Ascending aorta (tissue), 2 donors: ENCODE measurements at regions of chr15 and their contacts with region 1.

Region 1: DNA sequence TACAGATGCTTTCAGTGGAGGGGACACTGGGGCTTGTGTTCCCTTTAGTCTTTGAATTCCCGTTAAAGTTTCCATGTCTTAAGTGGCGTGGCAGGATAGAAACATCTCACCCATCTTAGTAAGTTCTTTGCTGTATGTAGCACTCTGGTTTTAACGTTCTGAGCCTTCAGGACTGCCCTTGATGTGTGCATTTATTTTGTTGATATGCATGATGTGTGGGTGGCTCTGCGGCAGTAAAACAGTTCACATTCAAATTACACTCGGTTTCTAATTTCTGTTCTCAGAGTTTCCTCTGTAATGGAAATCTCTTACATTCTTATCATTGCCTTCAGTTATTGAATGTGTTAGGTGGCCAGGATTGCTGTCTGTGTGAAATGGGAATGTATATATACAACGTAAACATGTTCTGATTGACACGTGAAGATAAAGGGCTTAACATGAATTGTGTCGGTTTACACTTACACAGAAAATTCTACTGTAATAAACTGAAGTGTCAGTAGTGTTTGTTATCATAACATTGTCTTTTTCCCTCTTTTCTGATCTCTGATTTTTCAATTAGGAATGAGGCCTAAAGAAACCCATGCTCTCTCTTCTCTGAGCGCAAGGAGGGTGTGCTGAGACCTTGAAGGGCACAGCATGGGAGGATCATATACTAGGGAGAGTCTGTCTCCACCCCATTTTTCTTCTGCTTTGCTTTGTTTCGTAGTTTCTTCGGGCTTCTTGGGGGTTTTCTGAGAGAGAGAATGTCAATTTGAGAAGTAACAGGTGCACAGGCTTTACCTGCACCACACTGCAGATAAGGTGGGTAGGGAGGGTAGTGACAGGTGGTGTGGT is 51.5 kb downstream of the IGF1R start:
- DNase-seq: no peak
- H3K4me3 ChIP-seq: no peak overlapping the region
- H3K27ac ChIP-seq: no peak overlapping the region
- H3K4me1 ChIP-seq: peaks cover 0 to 72% of the 10 kb centered on the region in 2 donors
- H3K27me3 ChIP-seq: no peaks in the 10 kb centered on the region
- CTCF ChIP-seq: no peak

Region 2: GRCh38 chr15:98745650-98746622 is 46.1 kb after region 1 on chr15:
- intact Hi-C with region 1: loop called (anchors 10 kb)
- DNase-seq: no peak
- H3K4me3 ChIP-seq: no peak overlapping the region
- H3K27ac ChIP-seq: no peak overlapping the region
- H3K4me1 ChIP-seq: peaks cover 4 to 25% of the 10 kb centered on the region in 2 donors
- H3K27me3 ChIP-seq: no peaks in the 10 kb centered on the region
- CTCF ChIP-seq: no peak

Region 3: GRCh38 chr15:98996169-98996568 is 296.4 kb after region 1 on chr15:
- intact Hi-C with region 1: no loop called
- DNase-seq: no peak
- H3K4me3 ChIP-seq: no peak overlapping the region
- H3K27ac ChIP-seq: no peak overlapping the region
- H3K4me1 ChIP-seq: no peaks in the 10 kb centered on the region
- H3K27me3 ChIP-seq: no peaks in the 10 kb centered on the region
- CTCF ChIP-seq: no peak